PC-9 (cell line): ENCODE measurements at regions of chr5 and their contacts with region 1.

Region 1: DNA sequence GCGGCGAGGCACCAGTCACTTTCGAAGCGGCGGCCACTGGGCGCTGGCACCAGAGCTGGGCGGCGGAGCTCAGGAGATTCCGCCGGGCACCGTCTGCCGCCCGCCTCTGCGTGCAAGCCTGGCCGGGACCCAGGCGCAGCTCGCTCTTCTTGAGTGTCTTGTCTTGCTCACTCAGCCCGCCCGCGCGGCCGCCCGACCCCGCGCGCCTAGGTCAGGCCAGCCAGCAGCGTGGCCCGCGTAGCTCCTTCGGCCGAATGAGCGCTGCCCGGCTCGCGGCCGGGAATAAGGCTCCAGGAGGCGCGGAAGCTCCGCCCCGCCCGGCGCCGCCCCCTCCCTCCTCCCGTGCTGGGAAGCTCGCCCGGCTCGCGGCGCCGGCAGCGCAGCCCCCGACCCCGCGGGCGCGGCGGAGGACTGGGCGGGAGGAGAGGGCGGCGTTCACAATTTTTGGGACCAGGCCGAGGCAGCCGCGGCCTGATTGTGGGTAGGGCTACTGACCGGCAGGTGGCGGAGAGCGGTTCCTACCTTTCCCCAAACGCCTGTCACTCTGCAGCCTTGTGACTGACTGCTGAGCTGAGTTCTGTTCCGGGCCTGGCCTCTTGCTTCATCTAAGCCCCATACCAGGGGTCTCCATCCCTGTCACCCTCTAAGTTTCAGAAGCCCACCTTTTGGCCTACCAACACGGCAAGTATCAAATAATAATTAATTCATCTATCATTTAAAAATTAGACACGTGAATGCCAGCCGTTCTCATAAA is at the start of gene HBEGF:
- DNase-seq: peak; percentile 70 to 92
- H3K4me3 ChIP-seq: peak within 1 kb of the TSS; percentile 94
- H3K27ac ChIP-seq: peak within 1 kb of the TSS; percentile 95
- H3K4me1 ChIP-seq: peaks cover 85% of the 10 kb centered on the region
- H3K27me3 ChIP-seq: no peaks in the 10 kb centered on the region
- CTCF ChIP-seq: peak; percentile 70
- total RNA-seq, gene HBEGF: 8.5 and 9.0 TPM in 2 replicates

Region 2: GRCh38 chr5:140073296-140073695 is 273.2 kb before region 1 on chr5:
- CTCF ChIA-PET with region 1: no interaction called
- POLR2A ChIA-PET with region 1: interaction called, 10 read pairs
- intact Hi-C with region 1: no loop called
- DNase-seq: no peak
- H3K4me3 ChIP-seq: no peak overlapping the region
- H3K27ac ChIP-seq: no peak overlapping the region
- H3K4me1 ChIP-seq: no peaks in the 10 kb centered on the region
- H3K27me3 ChIP-seq: no peaks in the 10 kb centered on the region
- CTCF ChIP-seq: peak; percentile 82

Region 3: DNA sequence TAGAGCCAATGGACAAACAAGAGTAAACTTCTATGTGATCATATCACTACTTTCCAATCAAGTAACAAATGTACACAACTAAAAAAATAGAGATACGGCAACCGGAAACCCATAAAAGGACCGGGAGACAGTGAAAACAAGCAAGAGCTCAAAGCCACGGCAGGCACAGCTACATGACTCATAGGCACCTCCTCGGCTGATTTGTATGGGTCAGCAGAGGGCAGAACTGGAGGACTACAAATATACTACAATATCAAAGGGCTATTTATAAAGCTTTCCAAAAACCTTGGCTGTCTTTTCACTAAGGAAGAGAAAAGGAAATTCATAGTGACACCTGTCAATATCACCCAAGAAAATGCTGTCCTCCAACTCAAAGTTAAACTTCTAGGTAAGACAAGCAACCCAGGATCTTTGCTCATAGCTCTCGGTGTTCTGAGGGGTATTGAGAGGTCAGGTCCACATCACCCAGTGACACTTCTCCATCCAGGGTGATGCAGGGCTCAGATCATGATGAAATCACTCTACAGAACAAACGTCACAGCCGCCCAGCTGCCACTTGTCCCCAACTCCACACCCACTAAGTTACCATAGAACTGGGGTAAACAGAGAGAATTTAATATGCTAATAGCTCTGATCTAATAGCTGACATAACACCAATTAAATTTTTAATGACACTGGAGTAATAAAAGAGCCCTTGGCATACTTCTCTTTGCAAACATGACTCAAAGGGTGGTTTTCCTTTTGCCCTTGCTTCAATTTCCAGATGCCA is 84.9 kb before region 1 on chr5:
- CTCF ChIA-PET with region 1: interaction called, 40 read pairs
- POLR2A ChIA-PET with region 1: interaction called, 21 read pairs
- intact Hi-C with region 1: no loop called
- DNase-seq: peak; percentile 77 to 95
- H3K4me3 ChIP-seq: peak overlapping the region; percentile 4; the same call in 1 of the 2 replicates
- H3K27ac ChIP-seq: peak overlapping the region; percentile 98
- H3K4me1 ChIP-seq: peaks cover 68% of the 10 kb centered on the region
- H3K27me3 ChIP-seq: no peaks in the 10 kb centered on the region
- CTCF ChIP-seq: no peak

Region 4: DNA sequence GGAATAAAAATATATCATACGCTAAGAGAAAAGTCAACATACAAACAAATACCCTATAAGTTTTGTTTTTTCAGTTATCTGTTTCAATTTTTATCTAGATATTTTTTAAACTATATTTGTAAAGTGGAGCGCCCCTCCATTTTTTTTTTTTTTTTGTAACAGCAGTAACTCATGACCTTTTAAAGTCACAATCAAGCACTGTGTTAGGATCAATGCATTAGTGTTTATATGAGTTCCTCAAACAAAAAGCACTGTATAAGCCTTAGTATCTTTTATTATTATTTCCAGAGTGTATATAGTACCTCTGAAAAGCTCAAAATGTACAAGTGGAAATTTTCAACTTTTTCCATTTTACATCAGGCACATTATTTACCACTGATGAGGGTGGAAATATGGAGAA is 64.3 kb before region 1 on chr5:
- CTCF ChIA-PET with region 1: no interaction called
- POLR2A ChIA-PET with region 1: no interaction called
- intact Hi-C with region 1: no loop called
- DNase-seq: no peak
- H3K4me3 ChIP-seq: no peak overlapping the region
- H3K27ac ChIP-seq: 0 out of 2 replicates have a peak overlapping the region, but pooled peaks have one; percentile 12
- H3K4me1 ChIP-seq: no peaks in the 10 kb centered on the region; the same call in 1 of the 2 replicates
- H3K27me3 ChIP-seq: no peaks in the 10 kb centered on the region
- CTCF ChIP-seq: no peak

Region 5: GRCh38 chr5:140302786-140303639 is 43.5 kb before region 1 on chr5 and contains the start of gene PFDN1:
- CTCF ChIA-PET with region 1: interaction called, 5 read pairs
- POLR2A ChIA-PET with region 1: no interaction called
- intact Hi-C with region 1: loop called (anchors 2 kb)
- DNase-seq: peak; percentile 89 to 90
- H3K4me3 ChIP-seq: peak within 1 kb of the TSS; percentile 95
- H3K27ac ChIP-seq: peak within 1 kb of the TSS; percentile 89
- H3K4me1 ChIP-seq: peaks cover 36% of the 10 kb centered on the region
- H3K27me3 ChIP-seq: no peaks in the 10 kb centered on the region
- CTCF ChIP-seq: no peak
- total RNA-seq, gene PFDN1: 62.7 and 69.1 TPM in 2 replicates

Region 6: GRCh38 chr5:140322751-140323731 is 23.5 kb before region 1 on chr5:
- CTCF ChIA-PET with region 1: interaction called, 8 read pairs
- POLR2A ChIA-PET with region 1: interaction called, 10 read pairs
- intact Hi-C with region 1: loop called (anchors 1 kb)
- DNase-seq: peak; percentile 80 to 95
- H3K4me3 ChIP-seq: peak overlapping the region; percentile 43; the same call in 1 of the 2 replicates
- H3K27ac ChIP-seq: peak overlapping the region; percentile 94
- H3K4me1 ChIP-seq: peaks cover 61% of the 10 kb centered on the region
- H3K27me3 ChIP-seq: no peaks in the 10 kb centered on the region
- CTCF ChIP-seq: no peak

Region 7: DNA sequence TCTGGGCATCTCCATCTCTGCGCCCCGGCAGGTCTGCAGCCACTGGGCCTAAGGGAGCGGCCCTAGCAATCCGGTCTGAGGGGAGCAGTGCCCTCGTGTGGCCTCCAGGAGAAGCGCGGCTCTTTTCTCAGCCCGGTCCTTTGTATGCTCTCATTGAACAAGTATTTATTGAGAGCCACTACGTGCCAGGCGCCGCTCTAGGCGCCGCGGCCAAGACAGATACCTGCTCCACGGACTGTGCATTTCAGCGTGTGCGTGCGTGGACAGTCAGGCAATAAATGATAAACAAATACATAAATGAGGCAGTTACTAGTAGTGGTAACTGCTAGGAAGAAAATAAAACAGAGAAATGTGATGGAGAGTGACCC is 11.2 kb after region 1 on chr5:
- CTCF ChIA-PET with region 1: interaction called, 13 read pairs
- POLR2A ChIA-PET with region 1: interaction called, 7 read pairs
- intact Hi-C with region 1: no loop called
- DNase-seq: peak; percentile 72 to 78
- H3K4me3 ChIP-seq: peak overlapping the region; percentile 24; the same call in 1 of the 2 replicates
- H3K27ac ChIP-seq: no peak overlapping the region
- H3K4me1 ChIP-seq: no peaks in the 10 kb centered on the region
- H3K27me3 ChIP-seq: no peaks in the 10 kb centered on the region
- CTCF ChIP-seq: peak; percentile 89

Region 8: GRCh38 chr5:140466981-140467742 is 120.6 kb after region 1 on chr5:
- CTCF ChIA-PET with region 1: no interaction called
- POLR2A ChIA-PET with region 1: no interaction called
- intact Hi-C with region 1: no loop called
- DNase-seq: no peak
- H3K4me3 ChIP-seq: no peak overlapping the region
- H3K27ac ChIP-seq: no peak overlapping the region
- H3K4me1 ChIP-seq: no peaks in the 10 kb centered on the region
- H3K27me3 ChIP-seq: no peaks in the 10 kb centered on the region
- CTCF ChIP-seq: no peak

Region 9: DNA sequence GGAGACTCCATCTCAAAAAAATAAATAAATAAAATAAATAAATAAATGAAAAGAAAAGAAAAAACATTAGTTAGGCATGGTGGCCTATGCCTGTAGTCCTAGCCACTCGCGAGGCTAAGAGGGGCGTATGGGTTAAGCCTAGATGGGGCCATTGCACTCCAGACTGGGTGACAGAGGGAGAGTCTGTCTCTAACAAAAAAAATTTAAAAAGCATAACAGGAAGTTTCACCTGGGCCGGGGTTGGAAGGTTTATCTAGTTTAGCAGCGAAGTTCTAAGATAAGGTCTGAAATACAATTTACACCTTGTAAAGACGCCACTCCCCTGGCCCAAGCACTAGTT is 371.7 kb after region 1 on chr5:
- CTCF ChIA-PET with region 1: no interaction called
- POLR2A ChIA-PET with region 1: no interaction called
- intact Hi-C with region 1: loop called (anchors 5 kb)
- DNase-seq: no peak
- H3K4me3 ChIP-seq: peak overlapping the region; percentile 66
- H3K27ac ChIP-seq: peak overlapping the region; percentile 91
- H3K4me1 ChIP-seq: 0 out of 2 replicates have a peak, but pooled peaks cover 5% of the 10 kb centered on the region
- H3K27me3 ChIP-seq: no peaks in the 10 kb centered on the region
- CTCF ChIP-seq: no peak